ENCODE measurements at regions of chr11 and their contacts with region 1.

Region 1: GRCh38 chr11:73047773-73048371 is 94.2 kb downstream of the FCHSD2 start:
- DNase-seq: no peak
- H3K4me3 ChIP-seq: no peak overlapping the region
- CTCF ChIP-seq: no peak
- POLR2A ChIP-seq: no peak

Region 2: DNA sequence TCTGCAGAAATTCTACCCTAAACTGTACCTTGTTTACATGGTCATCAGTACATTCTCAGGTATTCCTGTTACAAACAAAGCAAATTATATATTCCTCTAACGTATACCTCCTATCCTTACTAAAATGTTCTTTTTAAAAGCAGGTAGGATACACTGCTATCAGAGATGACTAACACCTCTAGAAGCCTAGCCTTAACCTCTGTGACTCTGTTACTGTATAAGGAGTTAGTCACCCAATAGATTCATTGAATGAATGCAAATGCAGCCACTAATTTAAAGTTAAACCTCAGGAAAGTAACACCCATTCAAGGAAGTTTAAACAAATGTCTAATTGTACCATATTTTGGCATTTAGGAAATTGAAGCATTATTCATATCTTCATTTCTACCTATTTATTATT is 12.0 kb after region 1 on chr11:
- intact Hi-C with region 1: loop called (anchors 2 kb)
- DNase-seq: no peak
- H3K4me3 ChIP-seq: no peak overlapping the region
- CTCF ChIP-seq: no peak
- POLR2A ChIP-seq: no peak

Region 3: DNA sequence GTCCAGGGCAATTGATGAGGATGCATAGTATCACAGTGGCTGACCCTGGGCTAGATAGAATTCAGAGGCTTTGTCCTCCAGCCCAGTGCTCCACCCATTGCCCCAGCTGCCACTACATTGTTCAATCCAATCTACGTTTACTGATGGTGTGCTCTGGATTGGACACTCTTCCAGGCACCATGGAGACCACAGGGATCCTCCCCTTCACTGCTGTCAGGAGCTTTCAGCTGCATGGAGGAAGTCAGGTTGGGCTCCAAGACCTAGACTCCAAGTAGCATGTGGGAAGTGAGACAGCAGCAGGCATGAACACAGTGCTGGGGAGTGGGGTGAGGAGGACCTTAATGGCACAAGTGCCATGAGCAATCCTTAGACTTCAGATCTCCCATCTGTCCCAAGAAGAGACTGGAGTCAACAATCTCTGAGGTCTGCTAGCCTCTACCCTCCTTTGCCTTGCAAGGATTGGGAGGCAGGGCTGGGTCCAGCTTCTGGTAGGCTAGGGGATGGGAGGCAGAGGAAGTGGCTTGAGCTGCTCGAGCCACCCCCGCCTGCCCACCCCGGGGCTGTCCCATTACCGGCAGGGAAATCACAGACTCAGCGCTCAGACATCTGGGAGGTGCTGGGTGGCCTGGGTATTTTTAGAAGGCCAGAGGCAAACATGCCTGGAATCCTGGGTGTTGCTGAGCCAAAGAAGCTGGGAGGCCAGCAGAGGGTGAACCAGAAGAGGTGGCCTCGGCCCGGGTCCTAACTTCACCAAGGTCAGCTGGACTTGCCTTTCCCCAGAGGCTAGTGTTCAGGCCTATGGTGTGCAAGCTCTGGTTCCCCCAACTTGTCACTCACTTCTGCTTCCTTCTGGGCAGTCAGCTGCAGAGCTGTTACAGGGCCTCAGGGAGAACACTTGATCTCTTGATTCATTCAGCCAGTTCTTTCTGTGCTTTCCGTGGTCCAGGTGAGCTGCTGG is 109.5 kb after region 1 on chr11:
- intact Hi-C with region 1: no loop called
- DNase-seq: peak in 1 of 2 donors; percentile 84
- H3K4me3 ChIP-seq: no peak overlapping the region
- CTCF ChIP-seq: no peak
- POLR2A ChIP-seq: no peak

Region 4: DNA sequence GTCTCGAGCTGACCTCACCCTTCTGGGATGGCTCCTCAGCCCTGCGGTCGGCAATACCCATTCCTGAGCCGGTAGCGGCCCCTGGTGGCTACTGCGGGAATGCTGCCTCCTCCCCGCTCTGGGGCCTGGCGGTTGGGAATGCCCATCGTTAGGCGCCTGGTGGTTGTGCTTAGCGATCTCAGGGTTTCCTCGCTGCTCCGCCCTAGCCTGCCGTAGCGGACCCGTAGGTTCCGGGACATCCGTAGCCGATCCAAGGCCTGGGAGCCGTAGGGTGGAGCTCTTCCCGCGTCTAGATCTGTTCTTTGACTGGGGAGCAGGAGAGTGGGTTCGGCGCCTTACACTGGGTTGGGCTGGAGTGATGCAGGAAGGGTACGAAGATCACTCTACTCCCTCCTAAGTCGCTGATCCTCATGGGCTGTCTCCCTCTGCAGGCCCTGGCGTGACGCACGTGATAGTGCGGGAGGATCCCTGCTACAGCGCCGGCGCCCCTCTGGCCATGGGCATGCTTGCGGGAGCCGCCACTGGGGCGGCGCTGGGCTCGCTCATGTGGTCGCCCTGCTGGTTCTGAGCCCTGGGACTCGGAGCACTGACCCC is 613.3 kb after region 1 on chr11:
- intact Hi-C with region 1: no loop called
- DNase-seq: peak; percentile 86 to 98
- H3K4me3 ChIP-seq: no peak overlapping the region
- CTCF ChIP-seq: peak in 1 of 3 donors; percentile 90
- POLR2A ChIP-seq: no peak